ENCODE measurements at regions of chr17 and their contacts with region 1.

Region 1: GRCh38 chr17:35808962-35809854 is at the start of gene TAF15:
- DNase-seq: peak; percentile 95 to 99 (median 97)
- H3K4me3 ChIP-seq: peak within 1 kb of the TSS; percentile 64 to 99 (median 89)
- H3K27ac ChIP-seq: peak within 1 kb of the TSS; percentile 86 to 99 (median 97)
- H3K27me3 ChIP-seq: no peaks in the 10 kb centered on the region
- CTCF ChIP-seq: peak; percentile 47 to 83 (median 68)
- total RNA-seq, gene TAF15: 108 to 175 (median 146) TPM

Region 2: DNA sequence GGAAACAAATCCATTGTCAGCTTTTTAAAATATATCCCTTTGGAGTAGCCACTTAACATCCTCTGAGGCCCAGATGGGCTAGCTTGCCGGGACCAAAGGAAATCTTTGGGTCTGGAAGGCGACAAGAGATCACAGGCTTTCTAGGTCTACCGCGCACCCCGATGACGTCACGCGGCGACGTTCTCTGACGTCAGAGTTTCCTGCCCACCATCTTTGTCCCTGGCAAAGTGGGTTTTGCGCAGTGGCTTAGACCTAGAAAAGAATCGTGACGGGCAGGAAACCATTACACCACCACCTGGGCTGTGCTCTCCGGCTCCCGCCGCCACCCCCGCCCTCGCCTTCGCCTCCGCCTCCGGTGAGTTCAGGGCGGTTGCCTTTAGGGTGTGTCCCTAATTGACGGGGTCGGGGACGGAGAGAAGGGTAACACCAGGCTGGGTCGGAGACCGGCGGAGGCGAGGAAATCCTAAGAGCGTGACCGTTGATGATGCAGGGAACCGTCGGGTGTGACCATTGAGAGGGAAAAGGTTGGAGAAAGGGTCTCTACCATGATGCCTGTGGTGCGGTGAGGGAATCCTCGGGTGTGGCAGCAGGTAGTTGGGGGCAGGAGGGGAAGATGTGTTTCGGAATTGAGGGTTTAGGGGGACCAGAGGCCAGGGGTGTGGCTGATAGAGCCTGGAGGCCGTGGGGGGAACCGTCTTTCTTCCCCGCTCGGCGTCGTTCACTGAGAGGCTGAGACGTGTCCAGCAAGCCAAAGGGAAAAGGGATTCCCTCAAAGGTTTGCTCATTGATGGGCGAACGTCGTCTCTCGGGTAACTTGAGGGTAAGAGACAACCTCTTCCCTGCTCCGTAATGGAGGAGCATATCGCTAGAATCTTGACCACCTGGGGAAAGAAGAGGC is 221.9 kb before region 1 on chr17 and contains the start of gene AP2B1:
- intact Hi-C with region 1: loop called in 1 of 2 experiments (anchors 10 kb)
- DNase-seq: peak; percentile 82 to 93 (median 90)
- H3K4me3 ChIP-seq: peak within 1 kb of the TSS; percentile 71 to 99 (median 90)
- H3K27ac ChIP-seq: peak within 1 kb of the TSS in 57 of 59 donors; percentile 19 to 95 (median 87)
- H3K27me3 ChIP-seq: no peaks in the 10 kb centered on the region
- CTCF ChIP-seq: peak in 22 of 56 donors; percentile 6 to 47 (median 20)
- total RNA-seq, gene AP2B1: 169 to 394 (median 287) TPM

Region 3: DNA sequence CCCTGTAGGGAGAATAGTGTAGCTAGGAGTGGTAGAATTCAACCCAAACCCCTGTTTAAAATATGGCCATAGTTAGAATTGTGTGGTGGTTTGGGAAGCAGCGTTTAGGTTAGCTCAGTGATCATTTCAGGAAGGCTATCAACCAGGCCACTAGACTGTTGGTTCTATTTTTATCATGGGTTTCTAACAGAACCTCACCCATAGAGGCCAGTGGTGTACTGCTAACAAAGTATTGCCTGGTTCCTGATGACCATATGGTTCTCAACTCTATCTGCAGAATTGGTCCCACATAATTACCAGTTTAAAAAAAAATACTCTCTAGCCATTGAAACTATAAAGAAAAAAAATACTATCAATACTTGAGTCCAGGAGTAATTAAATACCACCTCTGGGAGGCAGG is 148.3 kb before region 1 on chr17:
- intact Hi-C with region 1: no loop called
- DNase-seq: no peak
- H3K4me3 ChIP-seq: no peak overlapping the region
- H3K27ac ChIP-seq: peak overlapping the region in 3 of 59 donors; percentile 3 to 62 (median 25)
- H3K27me3 ChIP-seq: no peaks in the 10 kb centered on the region
- CTCF ChIP-seq: no peak

Region 4: DNA sequence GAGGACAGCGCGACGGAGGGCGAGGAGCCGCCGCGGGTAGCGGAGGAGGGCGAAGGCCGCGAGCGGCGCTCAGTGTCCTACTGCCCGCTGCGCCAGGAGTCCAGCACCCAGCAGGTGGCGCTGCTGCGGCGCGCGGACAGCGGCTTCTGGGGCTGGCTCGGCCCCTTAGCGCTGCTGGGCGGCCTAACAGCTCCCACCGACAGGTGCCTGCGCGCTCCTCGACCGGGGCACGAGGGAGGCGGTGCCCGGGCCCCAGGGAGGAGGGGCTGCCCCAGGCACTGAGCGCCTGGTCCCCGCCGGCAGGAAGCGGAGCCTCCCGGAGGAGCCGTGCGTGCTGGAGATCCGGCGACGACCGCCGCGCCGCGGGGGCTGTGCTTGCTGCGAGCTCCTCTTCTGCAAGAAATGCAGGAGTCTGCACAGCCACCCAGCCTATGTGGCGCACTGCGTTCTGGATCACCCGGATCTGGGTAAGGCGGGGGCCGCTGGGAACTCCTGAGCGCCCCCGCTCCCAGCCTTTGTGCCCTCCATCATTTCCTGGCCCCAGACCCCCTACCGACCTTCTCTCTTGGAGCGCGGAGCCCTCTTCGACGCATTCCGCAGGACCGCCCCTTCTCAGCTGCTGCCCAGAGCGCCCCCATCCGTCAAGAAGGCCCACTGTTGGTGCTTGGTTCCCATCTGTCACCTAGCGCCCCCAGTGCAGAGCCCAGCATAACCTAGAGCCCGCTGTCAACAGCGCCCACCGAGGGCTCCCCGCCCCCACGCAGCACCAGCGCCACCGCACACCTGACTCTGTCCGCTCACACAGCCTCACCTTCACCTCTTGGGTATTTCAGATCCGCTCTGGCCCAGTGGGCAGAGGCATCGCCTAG is 44.9 kb before region 1 on chr17:
- intact Hi-C with region 1: loop called (anchors 1 to 2 kb)
- DNase-seq: peak; percentile 66 to 91 (median 78)
- H3K4me3 ChIP-seq: peak overlapping the region; percentile 44 to 85 (median 69)
- H3K27ac ChIP-seq: peak overlapping the region in 52 of 59 donors; percentile 12 to 92 (median 77)
- H3K27me3 ChIP-seq: no peaks in the 10 kb centered on the region
- CTCF ChIP-seq: peak; percentile 73 to 98 (median 93)

Region 5: DNA sequence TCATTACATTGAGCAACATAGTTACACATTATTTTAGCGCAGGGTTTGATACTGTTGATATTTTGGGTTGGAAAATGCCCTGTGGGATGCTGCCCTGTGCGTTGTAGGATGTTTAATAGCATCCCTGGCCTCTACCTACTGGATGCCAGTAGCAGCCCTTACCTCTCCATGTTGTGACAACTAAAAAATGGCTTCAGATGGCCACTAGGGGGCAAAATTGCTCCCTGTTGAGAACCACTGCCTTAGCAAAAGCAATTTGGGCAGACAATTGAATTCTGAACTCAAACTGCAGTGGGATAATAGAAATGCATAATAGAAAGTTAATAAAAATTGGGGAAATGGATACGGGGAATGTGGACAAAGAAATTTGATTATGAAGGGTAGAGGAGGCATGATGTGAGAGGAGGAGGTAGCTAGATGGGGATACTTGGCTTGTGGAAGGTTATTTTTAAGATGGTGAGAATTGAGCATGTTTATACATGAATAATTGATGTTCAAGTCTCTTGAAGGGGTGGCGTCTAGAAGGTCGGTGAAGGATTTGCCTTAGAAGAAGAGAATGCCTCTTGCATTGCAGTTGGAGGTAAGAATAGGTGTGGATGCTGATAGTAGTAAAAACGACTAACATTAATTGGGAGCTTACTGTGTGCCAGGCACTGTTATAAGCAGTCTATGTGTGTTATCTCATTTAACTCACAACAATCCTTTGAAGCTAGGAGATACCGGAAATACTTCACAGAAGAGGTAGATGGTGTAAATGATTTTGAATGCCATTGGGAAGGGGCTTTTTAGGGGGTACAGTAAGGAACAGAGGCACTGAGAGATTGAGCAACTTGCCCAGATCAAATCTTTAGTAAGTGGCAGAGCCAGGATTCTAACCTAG is 40.5 kb after region 1 on chr17:
- intact Hi-C with region 1: loop called in 1 of 2 experiments (anchors 5 kb)
- DNase-seq: peak in 5 of 10 donors; percentile 27 to 60 (median 42)
- H3K4me3 ChIP-seq: no peak overlapping the region
- H3K27ac ChIP-seq: no peak overlapping the region
- H3K27me3 ChIP-seq: no peaks in the 10 kb centered on the region
- CTCF ChIP-seq: peak; percentile 36 to 84 (median 73)

Region 6: DNA sequence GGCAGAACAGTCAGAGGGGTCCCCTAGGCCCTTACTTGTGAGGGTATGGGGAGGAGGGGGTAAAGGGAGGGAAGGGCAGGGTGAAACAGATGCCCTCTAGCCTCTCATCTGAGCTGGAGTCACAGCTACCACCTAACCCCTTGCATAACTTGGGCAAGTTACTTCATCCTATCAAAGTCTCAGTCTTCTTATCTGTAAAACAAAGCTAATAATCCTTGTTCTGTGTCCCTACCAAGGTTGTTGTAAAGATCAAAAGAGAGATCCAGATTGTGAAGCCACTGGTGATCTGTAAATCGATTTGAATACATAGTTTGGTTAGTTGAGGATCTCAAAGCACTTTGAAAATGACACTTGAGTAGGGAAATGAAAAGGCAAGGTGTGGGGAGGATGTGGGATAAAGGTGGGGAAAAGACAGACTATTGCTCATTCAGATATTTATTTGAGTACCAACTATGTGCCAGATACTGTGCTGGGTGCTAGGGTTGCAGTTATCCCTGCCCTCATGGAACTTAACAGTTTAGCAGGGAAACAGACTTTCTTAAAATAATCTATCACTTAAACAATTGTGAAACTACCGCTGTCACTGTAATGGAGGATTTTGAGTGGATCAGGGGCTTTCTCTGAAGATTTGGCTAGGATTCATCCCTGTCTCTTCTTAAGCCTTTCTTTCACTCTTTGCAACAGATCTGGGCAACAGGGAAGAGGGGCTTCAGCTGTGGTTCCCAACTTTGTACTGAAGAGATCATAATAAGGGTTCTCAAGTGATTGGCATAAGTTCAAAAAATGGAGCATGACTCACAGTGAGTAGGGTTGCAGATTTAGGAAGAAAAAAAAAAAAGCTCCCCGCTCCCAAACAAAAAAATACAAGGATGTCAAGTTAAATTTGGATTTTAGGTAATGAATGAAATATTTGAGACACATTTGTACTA is 56.5 kb after region 1 on chr17:
- intact Hi-C with region 1: no loop called
- DNase-seq: no peak
- H3K4me3 ChIP-seq: no peak overlapping the region
- H3K27ac ChIP-seq: no peak overlapping the region
- H3K27me3 ChIP-seq: no peaks in the 10 kb centered on the region
- CTCF ChIP-seq: no peak

Measured in dorsolateral prefrontal cortex (tissue), 120 donors.